PC-9 (cell line): ENCODE measurements at regions of chr4 and their contacts with region 1.

Region 1: DNA sequence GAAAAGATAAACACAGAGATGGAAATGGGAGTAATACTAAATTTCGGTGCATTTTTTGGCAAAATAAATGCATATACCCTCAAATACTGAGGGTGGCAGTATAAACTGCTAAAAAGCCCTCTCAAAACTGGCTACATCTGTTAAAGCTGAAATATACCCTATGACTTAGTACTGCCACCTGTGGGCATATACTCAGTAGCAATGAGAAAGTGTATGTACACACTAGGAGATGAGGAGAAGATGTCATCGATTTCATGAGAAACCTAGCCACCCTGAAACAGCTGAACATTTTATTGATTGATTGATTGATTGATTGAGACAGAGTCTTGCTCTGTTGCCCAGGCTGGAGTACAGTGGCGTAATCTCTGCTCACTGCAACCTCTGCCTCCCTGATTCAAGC is 12.2 kb upstream of the TMEM128 start:
- DNase-seq: peak in 1 of 2 experiments; percentile 52
- H3K4me3 ChIP-seq: no peak overlapping the region
- H3K27ac ChIP-seq: no peak overlapping the region
- H3K4me1 ChIP-seq: peaks cover 8% of the 10 kb centered on the region
- H3K27me3 ChIP-seq: peaks cover 9% of the 10 kb centered on the region; the same call in 1 of the 2 replicates
- CTCF ChIP-seq: peak; percentile 55

Region 2: GRCh38 chr4:4334798-4335520 is 74.7 kb after region 1 on chr4:
- CTCF ChIA-PET with region 1: interaction called, 3 read pairs
- POLR2A ChIA-PET with region 1: no interaction called
- intact Hi-C with region 1: loop called (anchors 2 kb)
- DNase-seq: peak; percentile 40 to 67
- H3K4me3 ChIP-seq: no peak overlapping the region
- H3K27ac ChIP-seq: no peak overlapping the region
- H3K4me1 ChIP-seq: no peaks in the 10 kb centered on the region
- H3K27me3 ChIP-seq: peaks cover 21% of the 10 kb centered on the region
- CTCF ChIP-seq: peak; percentile 68

Region 3: DNA sequence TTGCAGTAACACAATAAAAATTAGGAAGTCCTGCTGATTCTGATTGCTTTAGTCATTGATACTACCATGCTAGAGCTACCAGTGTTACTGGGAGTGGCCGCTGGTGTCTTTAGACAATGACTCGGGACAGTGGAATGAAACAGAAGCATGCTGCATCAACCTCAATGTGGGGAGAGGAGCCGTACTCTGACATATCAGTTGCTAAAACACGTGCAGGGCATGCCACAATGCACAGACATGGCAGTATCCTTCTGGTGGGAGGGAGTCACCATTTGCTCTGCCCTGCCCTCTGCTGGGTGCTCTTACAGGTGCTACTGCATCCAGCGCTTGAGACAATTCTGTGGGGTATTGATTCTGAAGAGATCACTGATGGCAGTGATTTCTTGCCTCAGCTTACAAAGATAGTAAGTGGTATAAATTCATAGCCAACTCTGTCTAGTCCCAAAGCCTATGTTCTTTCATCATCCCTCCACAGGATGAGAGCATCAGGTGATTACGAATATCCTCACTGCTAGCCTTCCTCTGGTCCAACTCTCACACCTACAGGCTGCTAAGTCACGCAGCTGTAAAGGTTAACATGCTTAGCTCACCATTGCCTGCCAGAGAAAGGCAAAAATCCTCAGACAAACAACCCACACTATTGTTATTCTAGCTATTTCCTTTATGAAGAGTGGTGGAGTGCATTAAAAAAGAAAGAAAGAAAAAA is 170.4 kb after region 1 on chr4:
- CTCF ChIA-PET with region 1: no interaction called
- POLR2A ChIA-PET with region 1: no interaction called
- intact Hi-C with region 1: loop called (anchors 5 kb)
- DNase-seq: peak; percentile 17 to 49
- H3K4me3 ChIP-seq: no peak overlapping the region
- H3K27ac ChIP-seq: no peak overlapping the region
- H3K4me1 ChIP-seq: no peaks in the 10 kb centered on the region
- H3K27me3 ChIP-seq: no peaks in the 10 kb centered on the region
- CTCF ChIP-seq: peak; percentile 61